ENCODE measurements at regions of chr2 and their contacts with region 1.

Region 1: DNA sequence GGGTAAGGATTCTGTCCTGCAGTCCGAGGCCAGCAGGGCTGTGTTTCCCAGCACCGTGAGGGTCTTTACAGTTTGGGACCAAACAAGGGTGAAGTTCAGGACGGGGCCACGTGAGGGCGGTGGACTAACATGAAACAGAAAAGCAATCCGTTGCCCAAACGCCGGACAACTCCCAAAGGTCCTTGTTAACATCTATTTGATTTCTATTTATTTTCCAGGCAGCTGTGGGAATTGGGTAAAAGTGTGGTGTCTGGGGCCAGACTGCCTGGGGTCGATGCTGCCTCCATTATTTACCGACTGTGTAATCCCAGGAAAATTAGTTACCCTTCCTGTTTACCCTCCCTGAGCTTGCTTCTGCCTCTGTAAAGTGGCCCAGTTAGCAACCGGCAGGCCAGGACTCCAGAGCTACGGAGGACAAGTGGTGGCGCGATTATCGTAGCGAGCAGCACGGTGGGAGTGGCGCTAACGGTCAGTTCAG is 66.3 kb upstream of the TCF7L1 start:
- DNase-seq: peak; percentile 93
- ATAC-seq: peak; percentile 86
- H3K4me3 Mint-ChIP-seq: peak overlapping the region; percentile 55
- H3K27ac Mint-ChIP-seq: no peak overlapping the region
- H3K4me1 Mint-ChIP-seq: peaks cover 25% of the 10 kb centered on the region
- H3K27me3 Mint-ChIP-seq: peaks cover 30% of the 10 kb centered on the region
- CTCF ChIP-seq: peak; percentile 66

Region 2: DNA sequence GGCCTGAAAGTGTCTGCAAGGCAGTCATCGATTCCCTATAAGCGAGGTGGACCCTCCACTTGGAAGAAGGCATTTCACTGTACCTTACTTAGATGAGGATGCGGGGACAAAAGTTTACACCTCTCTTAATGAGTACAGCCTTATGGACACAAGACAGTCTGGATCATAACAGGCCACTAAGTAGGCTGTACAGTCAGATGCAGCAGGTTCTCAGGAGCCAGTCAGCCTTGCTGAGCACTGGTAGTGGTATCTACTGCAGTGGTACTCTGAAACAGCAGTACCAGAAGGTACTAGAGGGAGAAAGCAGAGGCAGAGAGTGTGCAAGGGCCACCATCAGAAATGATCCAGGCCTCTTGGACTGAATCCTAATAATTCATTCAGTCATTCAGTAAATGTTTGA is 18.4 kb before region 1 on chr2:
- CTCF ChIA-PET with region 1: no interaction called
- POLR2A ChIA-PET with region 1: no interaction called
- DNase-seq: no peak
- ATAC-seq: no peak
- H3K4me3 Mint-ChIP-seq: no peak overlapping the region
- H3K27ac Mint-ChIP-seq: peak overlapping the region; percentile 86
- H3K4me1 Mint-ChIP-seq: peaks cover 7% of the 10 kb centered on the region
- H3K27me3 Mint-ChIP-seq: no peaks in the 10 kb centered on the region
- CTCF ChIP-seq: no peak

Region 3: GRCh38 chr2:85089585-85089984 is 22.7 kb after region 1 on chr2:
- CTCF ChIA-PET with region 1: interaction called, 21 read pairs
- POLR2A ChIA-PET with region 1: no interaction called
- DNase-seq: peak; percentile 31
- ATAC-seq: peak; percentile 77
- H3K4me3 Mint-ChIP-seq: peak overlapping the region; percentile 37
- H3K27ac Mint-ChIP-seq: peak overlapping the region; percentile 63
- H3K4me1 Mint-ChIP-seq: peaks cover 27% of the 10 kb centered on the region
- H3K27me3 Mint-ChIP-seq: peaks cover 10% of the 10 kb centered on the region
- CTCF ChIP-seq: no peak

Region 4: DNA sequence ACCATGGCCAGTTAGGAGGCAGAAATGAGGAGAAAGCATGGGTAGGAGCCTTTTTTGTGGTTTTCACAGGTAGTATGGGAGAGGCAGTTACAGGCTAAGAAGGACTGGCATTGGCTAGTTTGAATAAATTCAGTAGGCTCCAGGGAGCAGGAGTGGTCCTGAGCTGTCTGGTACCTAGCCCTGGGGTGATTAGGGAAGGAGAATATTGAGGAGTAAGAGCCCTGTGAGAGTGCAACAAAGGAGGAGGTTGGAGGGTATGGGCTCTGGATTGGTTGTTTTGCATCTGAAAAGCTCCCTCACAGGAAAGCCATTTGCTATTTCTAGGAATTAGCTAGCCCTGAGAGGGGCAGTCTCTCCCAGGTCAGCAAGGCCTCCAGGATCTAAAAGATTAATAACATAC is 53.0 kb after region 1 on chr2:
- CTCF ChIA-PET with region 1: interaction called, 13 read pairs
- POLR2A ChIA-PET with region 1: no interaction called
- DNase-seq: peak; percentile 41
- ATAC-seq: peak; percentile 100
- H3K4me3 Mint-ChIP-seq: no peak overlapping the region
- H3K27ac Mint-ChIP-seq: no peak overlapping the region
- H3K4me1 Mint-ChIP-seq: peaks cover 17% of the 10 kb centered on the region
- H3K27me3 Mint-ChIP-seq: peaks cover 81% of the 10 kb centered on the region
- CTCF ChIP-seq: no peak

Region 5: DNA sequence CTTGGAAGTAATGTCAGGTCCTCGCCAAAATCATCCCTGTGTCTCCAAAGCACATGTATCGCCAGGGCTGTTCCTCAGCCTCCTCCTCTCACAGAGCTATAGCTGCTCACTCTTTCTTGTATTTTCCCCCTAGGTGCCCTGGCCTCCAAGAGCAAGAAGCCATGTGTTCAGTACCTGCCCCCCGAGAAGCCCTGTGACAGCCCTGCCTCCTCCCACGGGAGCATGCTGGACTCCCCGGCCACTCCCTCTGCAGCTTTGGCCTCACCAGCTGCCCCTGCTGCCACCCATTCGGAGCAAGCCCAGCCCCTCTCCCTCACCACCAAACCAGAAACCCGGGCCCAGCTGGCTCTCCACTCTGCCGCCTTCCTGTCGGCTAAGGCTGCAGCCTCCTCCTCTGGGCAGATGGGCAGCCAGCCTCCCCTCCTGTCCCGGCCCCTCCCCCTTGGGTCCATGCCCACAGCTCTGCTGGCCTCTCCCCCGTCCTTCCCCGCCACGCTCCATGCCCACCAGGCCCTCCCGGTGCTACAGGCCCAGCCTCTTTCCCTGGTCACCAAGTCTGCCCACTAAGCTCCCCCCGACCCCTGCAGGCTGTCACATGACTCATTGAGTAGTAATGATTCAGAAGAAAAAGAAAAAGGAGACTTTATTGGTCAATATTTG is 242.1 kb after region 1 on chr2:
- CTCF ChIA-PET with region 1: interaction called, 12 read pairs
- POLR2A ChIA-PET with region 1: no interaction called
- DNase-seq: no peak
- ATAC-seq: no peak
- H3K4me3 Mint-ChIP-seq: no peak overlapping the region
- H3K27ac Mint-ChIP-seq: no peak overlapping the region
- H3K4me1 Mint-ChIP-seq: peaks cover 19% of the 10 kb centered on the region
- H3K27me3 Mint-ChIP-seq: no peaks in the 10 kb centered on the region
- CTCF ChIP-seq: no peak

Region 6: GRCh38 chr2:85314884-85315242 is 247.9 kb after region 1 on chr2:
- CTCF ChIA-PET with region 1: interaction called, 12 read pairs
- POLR2A ChIA-PET with region 1: no interaction called
- DNase-seq: no peak
- ATAC-seq: no peak
- H3K4me3 Mint-ChIP-seq: no peak overlapping the region
- H3K27ac Mint-ChIP-seq: no peak overlapping the region
- H3K4me1 Mint-ChIP-seq: peaks cover 6% of the 10 kb centered on the region
- H3K27me3 Mint-ChIP-seq: no peaks in the 10 kb centered on the region
- CTCF ChIP-seq: no peak

Region 7: GRCh38 chr2:85327822-85328617 is 261.1 kb after region 1 on chr2 and contains the start of gene TGOLN2:
- CTCF ChIA-PET with region 1: interaction called, 15 read pairs
- POLR2A ChIA-PET with region 1: interaction called, 3 read pairs
- DNase-seq: peak; percentile 88
- ATAC-seq: peak; percentile 92
- H3K4me3 Mint-ChIP-seq: peak within 1 kb of the TSS; percentile 97
- H3K27ac Mint-ChIP-seq: peak within 1 kb of the TSS; percentile 100
- H3K4me1 Mint-ChIP-seq: peaks cover 45% of the 10 kb centered on the region
- H3K27me3 Mint-ChIP-seq: no peaks in the 10 kb centered on the region
- CTCF ChIP-seq: no peak
- total RNA-seq, gene TGOLN2: 42.2 to 43.9 TPM (median 43.7 TPM) in 3 replicates

Region 8: DNA sequence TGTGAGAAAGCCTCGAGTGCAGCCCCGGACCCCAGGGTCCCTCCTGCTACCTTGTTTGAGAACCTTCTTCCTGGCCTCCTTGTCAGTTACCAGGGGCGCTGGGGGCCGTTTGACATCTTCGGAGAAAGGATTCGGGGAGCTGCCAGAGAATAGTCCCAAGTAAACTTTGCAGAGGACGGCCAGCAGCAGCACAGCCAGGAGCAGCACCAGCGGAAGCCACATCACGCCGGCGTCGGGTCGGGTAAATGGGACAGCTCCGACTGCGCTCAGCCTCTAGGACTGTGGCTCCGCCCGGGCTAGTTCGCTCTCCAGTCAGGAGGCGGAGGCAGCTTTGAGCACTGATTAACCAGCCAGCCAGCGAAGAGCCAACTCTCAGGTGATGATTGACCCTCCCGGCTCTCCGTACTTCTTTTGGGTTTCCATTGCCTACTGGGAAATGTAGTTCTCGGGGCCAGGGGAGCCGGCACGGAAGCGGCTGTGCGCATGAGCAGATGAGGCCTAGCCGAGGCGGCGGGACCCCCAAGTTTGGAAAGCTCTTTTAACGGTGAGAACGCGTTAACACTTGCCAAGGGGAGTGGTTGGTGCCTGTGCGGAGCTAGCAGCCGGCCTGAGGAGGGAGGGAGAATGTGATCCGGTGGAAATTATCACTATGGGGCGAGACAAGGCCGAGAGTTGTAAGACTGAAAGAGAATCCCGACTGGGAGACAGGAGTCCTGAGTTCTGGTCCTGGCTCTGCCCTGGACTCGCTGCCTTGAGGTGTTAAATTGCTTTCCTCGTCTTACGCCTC is 287.6 kb after region 1 on chr2 and contains the starts of genes ELMOD3 and RETSAT:
- CTCF ChIA-PET with region 1: interaction called, 11 read pairs
- POLR2A ChIA-PET with region 1: no interaction called
- DNase-seq: peak; percentile 95
- ATAC-seq: peak; percentile 99
- H3K4me3 Mint-ChIP-seq: peak within 1 kb of the TSS; percentile 100
- H3K27ac Mint-ChIP-seq: peak within 1 kb of the TSS; percentile 96
- H3K4me1 Mint-ChIP-seq: peaks cover 16% of the 10 kb centered on the region
- H3K27me3 Mint-ChIP-seq: no peaks in the 10 kb centered on the region
- CTCF ChIP-seq: no peak
- total RNA-seq, gene ELMOD3: 9.7 to 10.8 TPM (median 10.6 TPM) in 3 replicates
- total RNA-seq, gene RETSAT: 18.9 to 24.4 TPM (median 21.6 TPM) in 3 replicates

Measured in WTC11 (cell line).